ENCODE measurements at regions of chr10 and their contacts with region 1.

Region 1: GRCh38 chr10:34933676-34934075 is 118.6 kb upstream of the PARD3 start:
- DNase-seq: peak; percentile 53
- H3K4me3 ChIP-seq: no peak overlapping the region
- H3K27ac ChIP-seq: peak overlapping the region in 1 of 2 donors; percentile 55
- H3K4me1 ChIP-seq: no peaks in the 10 kb centered on the region
- H3K27me3 ChIP-seq: no peaks in the 10 kb centered on the region
- CTCF ChIP-seq: no peak
- POLR2A ChIP-seq: no peak

Region 2: DNA sequence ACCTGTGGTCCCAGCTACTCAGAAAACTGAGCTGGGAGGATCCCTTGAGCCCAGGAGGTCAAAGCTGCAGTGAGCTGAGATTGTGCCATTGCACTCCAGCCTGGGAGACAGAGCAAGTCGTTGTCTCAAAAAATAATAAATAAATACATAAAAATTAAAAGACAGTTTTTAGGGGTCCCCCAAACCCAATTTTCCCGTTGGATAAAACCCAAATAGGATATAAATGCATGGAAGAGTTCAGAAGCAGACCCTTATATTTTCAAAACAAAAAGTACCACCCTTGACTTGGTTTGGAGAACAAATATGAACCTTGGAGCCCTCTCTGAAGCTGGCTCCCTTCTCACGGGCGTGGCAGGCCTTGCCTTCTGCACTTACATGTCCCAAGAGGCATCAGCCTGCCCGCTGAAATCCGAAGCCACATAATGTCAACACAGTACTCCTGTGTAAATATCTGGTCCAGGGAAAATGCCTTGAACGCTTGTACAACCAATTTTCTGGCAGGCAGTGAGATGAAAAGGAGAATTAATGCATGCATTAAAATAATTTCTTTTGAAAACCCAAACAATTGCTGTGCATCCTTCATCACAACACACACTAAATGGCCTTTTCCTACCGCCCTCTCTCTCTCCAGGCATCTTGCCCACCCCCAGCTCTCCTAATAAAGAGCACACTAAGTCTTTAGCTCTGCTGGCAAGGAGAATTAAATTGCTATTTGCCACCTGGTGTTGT is 72.2 kb before region 1 on chr10:
- intact Hi-C with region 1: loop called (anchors 10 kb)
- DNase-seq: peak; percentile 58
- H3K4me3 ChIP-seq: no peak overlapping the region
- H3K27ac ChIP-seq: no peak overlapping the region
- H3K4me1 ChIP-seq: peaks cover 9% of the 10 kb centered on the region
- H3K27me3 ChIP-seq: no peaks in the 10 kb centered on the region
- CTCF ChIP-seq: no peak
- POLR2A ChIP-seq: no peak

Region 3: GRCh38 chr10:34906067-34906965 is 27.4 kb before region 1 on chr10:
- intact Hi-C with region 1: no loop called
- DNase-seq: peak; percentile 82
- H3K4me3 ChIP-seq: no peak overlapping the region
- H3K27ac ChIP-seq: peak overlapping the region; percentile 22 to 24
- H3K4me1 ChIP-seq: peaks cover 5% of the 10 kb centered on the region
- H3K27me3 ChIP-seq: no peaks in the 10 kb centered on the region
- CTCF ChIP-seq: no peak
- POLR2A ChIP-seq: peak; percentile 36

Region 4: GRCh38 chr10:34967335-34967880 is 33.7 kb after region 1 on chr10:
- intact Hi-C with region 1: no loop called
- DNase-seq: peak; percentile 33
- H3K4me3 ChIP-seq: no peak overlapping the region
- H3K27ac ChIP-seq: peak overlapping the region in 1 of 2 donors; percentile 29
- H3K4me1 ChIP-seq: no peaks in the 10 kb centered on the region
- H3K27me3 ChIP-seq: no peaks in the 10 kb centered on the region
- CTCF ChIP-seq: no peak
- POLR2A ChIP-seq: no peak

Region 5: GRCh38 chr10:35843524-35844181 is 910.0 kb after region 1 on chr10:
- intact Hi-C with region 1: no loop called
- DNase-seq: no peak
- H3K4me3 ChIP-seq: no peak overlapping the region
- H3K27ac ChIP-seq: no peak overlapping the region
- H3K4me1 ChIP-seq: no peaks in the 10 kb centered on the region
- H3K27me3 ChIP-seq: no peaks in the 10 kb centered on the region
- CTCF ChIP-seq: no peak
- POLR2A ChIP-seq: no peak

Measured in prostate gland (tissue), 2 donors.